PC-3 (cell line): ENCODE measurements at regions of chr3 and their contacts with region 1.

Region 1: GRCh38 chr3:169668957-169669681 is 5.6 kb upstream of the MECOM start:
- DNase-seq: peak; percentile 86
- ATAC-seq: peak; percentile 91
- H3K4me3 ChIP-seq: peak overlapping the region; percentile 75
- H3K27ac ChIP-seq: no peak overlapping the region
- H3K4me1 ChIP-seq: peaks cover 6% of the 10 kb centered on the region; the same call in 1 of the 2 replicates
- H3K27me3 ChIP-seq: no peaks in the 10 kb centered on the region
- CTCF ChIP-seq: peak; percentile 94

Region 2: GRCh38 chr3:168952551-168952950 is 716.6 kb before region 1 on chr3:
- CTCF ChIA-PET with region 1: interaction called, 4 read pairs
- POLR2A ChIA-PET with region 1: no interaction called
- intact Hi-C with region 1: loop called (anchors 10 kb)
- DNase-seq: peak; percentile 73
- ATAC-seq: peak; percentile 47
- H3K4me3 ChIP-seq: no peak overlapping the region
- H3K27ac ChIP-seq: peak overlapping the region; percentile 89
- H3K4me1 ChIP-seq: peaks cover 34% of the 10 kb centered on the region
- H3K27me3 ChIP-seq: no peaks in the 10 kb centered on the region
- CTCF ChIP-seq: peak; percentile 73

Region 3: GRCh38 chr3:169041677-169042171 is 627.4 kb before region 1 on chr3:
- CTCF ChIA-PET with region 1: interaction called, 3 read pairs
- POLR2A ChIA-PET with region 1: no interaction called
- intact Hi-C with region 1: loop called (anchors 1 kb)
- DNase-seq: peak; percentile 64
- ATAC-seq: 0 out of 2 replicates have a peak, but pooled peaks have one; percentile 9
- H3K4me3 ChIP-seq: peak overlapping the region; percentile 24; the same call in 1 of the 2 replicates
- H3K27ac ChIP-seq: no peak overlapping the region
- H3K4me1 ChIP-seq: peaks cover 33% of the 10 kb centered on the region
- H3K27me3 ChIP-seq: no peaks in the 10 kb centered on the region
- CTCF ChIP-seq: peak; percentile 81

Region 4: DNA sequence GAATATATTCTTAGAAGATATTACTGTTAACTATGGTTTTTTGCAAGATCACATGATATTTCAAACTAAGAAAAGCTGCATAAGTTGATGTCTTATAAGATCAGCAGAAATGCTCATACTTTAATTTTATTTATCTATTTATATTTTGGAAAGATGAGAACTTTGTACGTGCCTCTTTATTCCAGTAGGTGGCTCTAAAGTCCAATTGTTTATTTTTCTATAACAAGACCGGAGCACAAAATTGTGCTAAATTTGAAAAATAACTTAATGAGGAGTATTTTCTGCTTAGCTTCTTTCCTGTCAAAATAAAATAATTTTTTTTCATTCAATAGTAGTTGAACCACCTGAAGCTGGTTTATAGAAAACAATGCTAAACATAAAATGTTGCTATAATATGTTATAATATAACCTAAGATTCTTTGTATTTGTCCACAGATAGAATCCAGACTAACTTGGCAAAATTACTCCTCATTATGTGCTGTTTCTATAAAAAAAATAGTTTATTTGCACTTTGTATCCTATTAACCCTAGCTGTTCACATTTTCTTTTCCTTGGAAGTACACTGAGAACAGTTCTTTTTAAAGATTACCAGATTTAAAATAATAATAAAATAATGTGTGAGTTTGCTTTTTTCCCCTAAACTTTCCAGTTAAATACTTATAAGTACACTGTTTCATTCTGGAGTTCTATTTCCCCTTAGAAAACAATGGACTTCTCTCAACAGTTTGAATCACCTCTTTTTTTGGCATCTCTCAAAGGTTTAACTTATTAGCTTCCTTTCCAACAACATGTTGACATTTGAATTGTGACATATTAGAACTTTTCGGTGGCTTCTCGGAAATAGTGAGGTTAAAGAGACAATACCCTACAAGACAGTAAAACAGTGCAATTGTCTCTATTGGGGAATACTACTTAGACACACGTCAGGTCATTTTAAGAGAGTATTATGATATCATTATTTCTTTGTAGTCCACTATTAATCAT is 535.6 kb before region 1 on chr3:
- CTCF ChIA-PET with region 1: interaction called, 5 read pairs
- POLR2A ChIA-PET with region 1: no interaction called
- intact Hi-C with region 1: loop called (anchors 1 kb)
- DNase-seq: peak; percentile 63
- ATAC-seq: peak; percentile 67
- H3K4me3 ChIP-seq: no peak overlapping the region
- H3K27ac ChIP-seq: no peak overlapping the region; the same call in 1 of the 2 replicates
- H3K4me1 ChIP-seq: peaks cover 23% of the 10 kb centered on the region
- H3K27me3 ChIP-seq: no peaks in the 10 kb centered on the region
- CTCF ChIP-seq: peak; percentile 80

Region 5: GRCh38 chr3:169278092-169278491 is 391.0 kb before region 1 on chr3:
- CTCF ChIA-PET with region 1: no interaction called
- POLR2A ChIA-PET with region 1: no interaction called
- intact Hi-C with region 1: loop called (anchors 2 kb)
- DNase-seq: no peak
- ATAC-seq: no peak
- H3K4me3 ChIP-seq: no peak overlapping the region
- H3K27ac ChIP-seq: no peak overlapping the region
- H3K4me1 ChIP-seq: peaks cover 29% of the 10 kb centered on the region
- H3K27me3 ChIP-seq: no peaks in the 10 kb centered on the region
- CTCF ChIP-seq: no peak

Region 6: GRCh38 chr3:169390271-169391230 is 278.6 kb before region 1 on chr3:
- CTCF ChIA-PET with region 1: no interaction called
- POLR2A ChIA-PET with region 1: no interaction called
- intact Hi-C with region 1: loop called (anchors 2 kb)
- DNase-seq: peak; percentile 57
- ATAC-seq: peak; percentile 87
- H3K4me3 ChIP-seq: no peak overlapping the region
- H3K27ac ChIP-seq: no peak overlapping the region
- H3K4me1 ChIP-seq: 0 out of 2 replicates have a peak, but pooled peaks cover 11% of the 10 kb centered on the region
- H3K27me3 ChIP-seq: no peaks in the 10 kb centered on the region
- CTCF ChIP-seq: peak; percentile 59